ENCODE measurements at regions of chr9 and their contacts with region 1.

Region 1: DNA sequence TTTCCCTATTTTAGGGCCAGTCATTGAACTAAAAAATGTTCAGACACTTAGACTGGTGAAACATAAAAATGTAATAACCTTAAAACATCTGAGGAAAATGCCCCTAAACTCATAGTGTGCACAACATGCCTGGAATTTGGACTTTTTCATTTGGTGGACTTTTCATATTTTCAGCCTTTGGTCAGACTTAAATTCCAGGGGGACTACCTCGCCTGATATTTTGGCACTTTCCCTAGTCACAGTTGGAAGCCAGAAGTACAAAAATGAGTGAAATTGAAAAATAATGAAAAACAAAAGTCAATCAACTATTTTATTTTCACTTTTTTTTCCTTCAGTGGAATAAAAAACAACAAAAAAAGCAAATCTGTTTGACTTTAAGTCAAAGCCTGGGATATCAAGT is 256.2 kb downstream of the ACTL7B start:
- DNase-seq: no peak
- ATAC-seq: no peak
- H3K4me3 ChIP-seq: no peak overlapping the region
- H3K4me3 Mint-ChIP-seq: no peak overlapping the region
- H3K27ac ChIP-seq: no peak overlapping the region
- H3K27ac Mint-ChIP-seq: no peak overlapping the region
- H3K4me1 ChIP-seq: no peaks in the 10 kb centered on the region
- H3K4me1 Mint-ChIP-seq: no peaks in the 10 kb centered on the region
- H3K27me3 ChIP-seq: no peaks in the 10 kb centered on the region
- H3K27me3 Mint-ChIP-seq: peaks cover 5% of the 10 kb centered on the region
- CTCF ChIP-seq: no peak

Region 2: GRCh38 chr9:108535526-108535925 is 64.0 kb before region 1 on chr9:
- CTCF ChIA-PET with region 1: no interaction called
- POLR2A ChIA-PET with region 1: no interaction called
- intact Hi-C with region 1: loop called in 1 of 2 experiments (anchors 10 kb)
- DNase-seq: peak in 1 of 14 experiments; percentile 3
- ATAC-seq: no peak
- H3K4me3 ChIP-seq: no peak overlapping the region
- H3K4me3 Mint-ChIP-seq: no peak overlapping the region
- H3K27ac ChIP-seq: no peak overlapping the region
- H3K27ac Mint-ChIP-seq: no peak overlapping the region
- H3K4me1 ChIP-seq: no peaks in the 10 kb centered on the region
- H3K4me1 Mint-ChIP-seq: no peaks in the 10 kb centered on the region
- H3K27me3 ChIP-seq: no peaks in the 10 kb centered on the region
- H3K27me3 Mint-ChIP-seq: peaks cover 4% of the 10 kb centered on the region
- CTCF ChIP-seq: no peak

Region 3: GRCh38 chr9:108562176-108562575 is 37.4 kb before region 1 on chr9:
- CTCF ChIA-PET with region 1: no interaction called
- POLR2A ChIA-PET with region 1: no interaction called
- intact Hi-C with region 1: no loop called
- DNase-seq: no peak
- ATAC-seq: no peak
- H3K4me3 ChIP-seq: no peak overlapping the region
- H3K4me3 Mint-ChIP-seq: no peak overlapping the region
- H3K27ac ChIP-seq: no peak overlapping the region
- H3K27ac Mint-ChIP-seq: no peak overlapping the region
- H3K4me1 ChIP-seq: no peaks in the 10 kb centered on the region
- H3K4me1 Mint-ChIP-seq: no peaks in the 10 kb centered on the region
- H3K27me3 ChIP-seq: no peaks in the 10 kb centered on the region
- H3K27me3 Mint-ChIP-seq: peaks cover 15% of the 10 kb centered on the region
- CTCF ChIP-seq: no peak

Measured in CD4-positive, alpha-beta T cell (primary cell).